Activated CD4-positive, alpha-beta memory T cell treated with anti-CD3 and anti-CD28 coated beads for 36 hours (primary cell): ENCODE measurements at regions of chr1 and their contacts with region 1.

Region 1: GRCh38 chr1:12619792-12620487 is 1.9 kb upstream of the DHRS3 start:
- DNase-seq: peak; percentile 87
- H3K4me3 Mint-ChIP-seq: peak overlapping the region; percentile 95
- H3K27ac Mint-ChIP-seq: peak overlapping the region; percentile 52
- H3K4me1 Mint-ChIP-seq: peaks cover 36% of the 10 kb centered on the region
- H3K27me3 Mint-ChIP-seq: no peaks in the 10 kb centered on the region

Region 2: DNA sequence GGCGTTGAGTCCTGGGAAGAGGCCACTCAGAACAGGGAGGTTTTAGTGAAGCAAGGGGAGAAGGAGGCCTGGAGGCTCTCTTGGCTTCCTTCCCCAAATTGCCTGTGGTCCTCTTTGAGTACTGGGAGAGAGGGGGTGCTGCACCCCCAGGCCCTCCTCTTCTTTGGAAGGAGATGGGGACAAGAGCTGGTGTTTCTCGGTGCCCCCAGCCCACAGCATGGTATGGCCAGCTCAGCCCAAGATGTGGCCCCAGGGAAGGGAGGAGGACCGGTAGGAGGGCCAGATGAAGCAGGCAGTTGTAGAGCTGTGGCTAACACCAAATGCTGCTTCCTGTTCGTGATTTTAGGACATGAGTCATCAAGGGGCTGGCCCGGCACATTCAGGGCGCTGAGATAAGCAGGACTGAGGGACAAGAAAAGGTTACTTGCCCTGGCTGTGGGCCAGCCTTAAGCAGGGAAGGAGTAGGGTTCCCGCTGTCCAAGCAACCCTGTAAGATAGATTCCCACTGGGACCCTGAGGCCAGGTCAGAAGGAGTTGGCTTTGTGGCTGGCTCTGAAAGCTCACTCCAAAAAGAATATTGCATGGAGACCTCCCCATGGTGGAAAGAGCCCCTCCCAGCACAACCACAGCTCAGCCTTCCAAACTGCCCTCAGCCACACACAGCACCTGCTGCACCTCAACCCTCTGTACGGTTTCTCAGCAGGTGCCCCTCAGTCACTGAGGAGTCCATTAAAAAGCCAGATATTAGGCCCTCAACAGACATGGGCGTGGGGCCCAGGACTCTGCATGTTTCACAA is 458.1 kb before region 1 on chr1:
- CTCF ChIA-PET with region 1: no interaction called
- POLR2A ChIA-PET with region 1: no interaction called
- intact Hi-C with region 1: no loop called
- DNase-seq: peak; percentile 92
- H3K4me3 Mint-ChIP-seq: no peak overlapping the region
- H3K27ac Mint-ChIP-seq: peak overlapping the region; percentile 90
- H3K4me1 Mint-ChIP-seq: peaks cover 80% of the 10 kb centered on the region
- H3K27me3 Mint-ChIP-seq: no peaks in the 10 kb centered on the region

Region 3: DNA sequence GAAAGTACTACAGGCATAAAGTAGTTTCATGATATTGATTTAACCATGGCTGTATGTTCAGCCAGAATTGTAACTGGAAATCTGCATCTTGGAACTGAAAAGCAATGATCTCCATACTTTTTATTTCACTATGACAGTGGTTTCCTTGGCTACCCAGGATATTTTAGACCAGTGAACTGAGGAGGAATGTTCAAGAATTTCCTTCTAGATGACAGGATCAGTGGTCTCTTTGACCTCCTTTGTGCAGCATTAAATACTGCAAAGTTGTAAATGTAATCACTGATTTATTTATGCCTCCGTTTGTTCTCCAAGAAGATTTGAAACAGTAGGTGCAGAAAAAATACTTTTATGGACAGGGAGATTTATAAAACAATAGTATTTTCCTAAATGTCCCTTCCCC is 350.6 kb before region 1 on chr1:
- CTCF ChIA-PET with region 1: interaction called, 15 read pairs
- POLR2A ChIA-PET with region 1: no interaction called
- intact Hi-C with region 1: loop called (anchors 1 kb)
- DNase-seq: no peak
- H3K4me3 Mint-ChIP-seq: no peak overlapping the region
- H3K27ac Mint-ChIP-seq: no peak overlapping the region
- H3K4me1 Mint-ChIP-seq: no peaks in the 10 kb centered on the region
- H3K27me3 Mint-ChIP-seq: no peaks in the 10 kb centered on the region

Region 4: DNA sequence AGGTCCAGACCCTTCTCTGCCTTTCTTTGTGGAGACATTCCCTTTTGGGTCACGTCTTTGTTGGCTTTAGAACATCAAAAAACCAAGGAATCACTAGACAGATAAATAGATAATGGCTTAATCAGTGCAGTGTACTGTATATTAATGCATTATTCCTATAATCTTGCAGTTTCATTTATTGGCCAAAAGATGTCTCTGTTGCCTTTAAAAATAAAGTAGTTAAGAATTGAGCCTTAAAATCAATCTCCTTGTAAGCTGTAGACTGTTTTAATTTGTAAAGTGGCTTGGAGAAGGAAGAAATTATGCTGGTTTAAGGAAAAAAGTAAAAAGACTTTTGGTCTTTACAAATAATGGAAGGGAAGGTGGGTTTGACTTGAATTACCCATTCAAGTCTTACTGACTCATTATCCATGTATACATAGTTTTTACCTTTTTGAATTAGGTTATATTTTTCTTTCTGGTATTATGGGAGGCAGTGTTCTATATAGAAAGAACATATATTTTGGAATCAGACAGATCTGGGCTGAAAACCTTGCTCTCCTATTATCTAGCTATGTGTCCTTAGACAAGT is 305.5 kb before region 1 on chr1:
- CTCF ChIA-PET with region 1: interaction called, 17 read pairs
- POLR2A ChIA-PET with region 1: no interaction called
- intact Hi-C with region 1: loop called (anchors 1 kb)
- DNase-seq: no peak
- H3K4me3 Mint-ChIP-seq: no peak overlapping the region
- H3K27ac Mint-ChIP-seq: no peak overlapping the region
- H3K4me1 Mint-ChIP-seq: no peaks in the 10 kb centered on the region
- H3K27me3 Mint-ChIP-seq: no peaks in the 10 kb centered on the region

Region 5: GRCh38 chr1:12415038-12415466 is 204.9 kb before region 1 on chr1:
- CTCF ChIA-PET with region 1: interaction called, 5 read pairs
- POLR2A ChIA-PET with region 1: interaction called, 3 read pairs
- intact Hi-C with region 1: loop called (anchors 2 kb)
- DNase-seq: no peak
- H3K4me3 Mint-ChIP-seq: no peak overlapping the region
- H3K27ac Mint-ChIP-seq: peak overlapping the region; percentile 57
- H3K4me1 Mint-ChIP-seq: peaks cover 21% of the 10 kb centered on the region
- H3K27me3 Mint-ChIP-seq: no peaks in the 10 kb centered on the region

Region 6: DNA sequence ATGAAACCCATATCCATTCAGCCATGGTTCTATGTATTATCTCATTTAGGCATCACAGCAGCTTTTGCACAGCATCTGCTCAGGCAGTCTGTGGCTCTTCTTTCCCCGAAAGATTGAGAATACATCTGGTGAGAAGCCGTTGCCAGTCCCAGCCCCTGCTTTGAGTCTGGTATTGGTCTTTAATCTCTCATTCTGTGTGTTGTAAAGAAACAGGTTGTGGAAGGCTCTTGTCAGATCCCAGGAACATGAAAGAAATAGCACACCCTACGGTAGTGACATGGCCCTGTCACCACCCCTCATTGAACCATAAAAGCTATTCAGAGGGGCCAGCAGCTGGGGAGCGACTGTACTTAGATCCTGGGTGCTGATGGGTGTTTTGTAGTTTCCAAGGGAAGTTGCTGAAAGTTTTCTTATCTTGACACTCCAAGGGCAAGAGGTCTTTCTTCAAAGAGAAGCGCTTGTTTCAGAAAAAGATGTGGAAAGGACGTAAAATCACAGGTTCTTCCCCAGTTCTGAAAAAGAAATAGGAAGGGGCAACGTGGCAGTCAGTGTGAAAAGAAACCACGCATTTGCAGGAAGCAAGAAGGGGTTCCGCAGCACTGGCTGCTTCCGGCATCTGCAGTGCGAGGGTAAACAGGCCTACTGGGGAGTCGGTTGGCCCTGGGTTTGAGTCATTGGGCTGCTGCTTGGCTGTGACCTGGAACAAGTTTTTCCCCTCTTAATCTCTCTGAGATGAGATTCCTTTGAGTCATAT is 147.0 kb before region 1 on chr1:
- CTCF ChIA-PET with region 1: interaction called, 6 read pairs
- POLR2A ChIA-PET with region 1: interaction called, 4 read pairs
- intact Hi-C with region 1: loop called (anchors 2 kb)
- DNase-seq: peak; percentile 91
- H3K4me3 Mint-ChIP-seq: peak overlapping the region; percentile 62
- H3K27ac Mint-ChIP-seq: peak overlapping the region; percentile 95
- H3K4me1 Mint-ChIP-seq: peaks cover 87% of the 10 kb centered on the region
- H3K27me3 Mint-ChIP-seq: no peaks in the 10 kb centered on the region

Region 7: GRCh38 chr1:12582649-12583048 is 37.3 kb before region 1 on chr1:
- CTCF ChIA-PET with region 1: no interaction called
- POLR2A ChIA-PET with region 1: no interaction called
- intact Hi-C with region 1: no loop called
- DNase-seq: no peak
- H3K4me3 Mint-ChIP-seq: no peak overlapping the region
- H3K27ac Mint-ChIP-seq: no peak overlapping the region
- H3K4me1 Mint-ChIP-seq: peaks cover 2% of the 10 kb centered on the region
- H3K27me3 Mint-ChIP-seq: no peaks in the 10 kb centered on the region

Region 8: GRCh38 chr1:12658531-12659453 is 38.9 kb after region 1 on chr1:
- CTCF ChIA-PET with region 1: interaction called, 25 read pairs
- POLR2A ChIA-PET with region 1: interaction called, 3 read pairs
- intact Hi-C with region 1: loop called (anchors 2 kb)
- DNase-seq: peak; percentile 78
- H3K4me3 Mint-ChIP-seq: no peak overlapping the region
- H3K27ac Mint-ChIP-seq: no peak overlapping the region
- H3K4me1 Mint-ChIP-seq: peaks cover 6% of the 10 kb centered on the region
- H3K27me3 Mint-ChIP-seq: peaks cover 3% of the 10 kb centered on the region

Region 9: GRCh38 chr1:12690156-12690555 is 70.2 kb after region 1 on chr1:
- CTCF ChIA-PET with region 1: no interaction called
- POLR2A ChIA-PET with region 1: no interaction called
- intact Hi-C with region 1: no loop called
- DNase-seq: no peak
- H3K4me3 Mint-ChIP-seq: no peak overlapping the region
- H3K27ac Mint-ChIP-seq: no peak overlapping the region
- H3K4me1 Mint-ChIP-seq: no peaks in the 10 kb centered on the region
- H3K27me3 Mint-ChIP-seq: peaks cover 12% of the 10 kb centered on the region